Ovary (tissue), 10 donors: ENCODE measurements at regions of chr17 and their contacts with region 1.

Region 1: DNA sequence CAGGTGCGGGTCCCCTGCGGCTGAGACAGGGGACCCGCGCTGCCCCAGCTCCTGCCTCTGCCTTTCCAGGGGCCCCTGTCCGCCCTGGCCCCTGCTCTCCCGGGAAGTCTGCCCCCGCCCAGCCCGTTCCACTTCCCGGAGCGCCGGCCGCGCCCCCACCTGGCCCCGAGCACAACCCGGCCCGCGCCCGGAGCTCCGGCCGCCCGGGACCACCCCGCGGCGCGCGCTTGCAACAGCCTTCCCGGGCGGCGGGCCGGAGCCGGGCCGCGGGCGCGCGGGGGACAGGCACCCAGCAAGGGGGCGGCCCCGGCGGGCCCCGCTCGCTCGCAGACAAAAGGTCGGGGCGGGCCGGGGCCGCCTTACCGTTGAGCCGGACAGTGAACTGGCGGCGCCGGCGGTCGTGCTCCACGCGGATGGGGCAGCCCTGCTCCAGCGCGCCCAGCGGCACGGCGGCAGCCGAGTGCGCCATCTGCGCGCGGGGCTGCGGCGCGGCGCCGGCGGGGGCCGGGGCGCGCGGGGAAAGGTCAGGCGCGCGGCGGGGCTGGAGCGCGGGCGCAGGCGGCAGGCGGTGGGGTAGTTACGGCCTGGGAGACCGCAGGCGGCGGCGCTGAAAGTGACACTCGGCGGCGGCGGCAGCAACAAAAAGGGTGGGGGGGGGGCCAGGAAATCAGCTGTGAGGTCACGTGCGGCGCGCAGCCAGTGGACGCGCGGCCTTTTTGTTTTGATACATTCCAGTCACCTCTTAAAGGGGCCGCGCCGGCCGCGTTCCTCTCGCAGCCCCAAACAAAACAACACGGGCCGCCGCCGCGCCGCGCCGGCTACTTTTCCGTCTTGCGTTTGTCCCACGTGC is at the start of gene NATD1:
- DNase-seq: peak; percentile 78 to 89 (median 85)
- H3K4me3 ChIP-seq: peak within 1 kb of the TSS; percentile 56
- H3K27ac ChIP-seq: peak within 1 kb of the TSS in 1 of 2 donors; percentile 42
- H3K4me1 ChIP-seq: peaks cover 6% of the 10 kb centered on the region
- H3K27me3 ChIP-seq: no peaks in the 10 kb centered on the region
- CTCF ChIP-seq: no peak
- EP300 ChIP-seq: no peak
- POLR2A ChIP-seq: no peak
- total RNA-seq, gene NATD1: 2.8 to 9.0 (median 5.2) TPM

Region 2: GRCh38 chr17:21043286-21044232 is 209.5 kb before region 1 on chr17:
- intact Hi-C with region 1: loop called in 1 of 4 experiments (anchors 10 kb)
- DNase-seq: peak; percentile 97 to 99 (median 98)
- H3K4me3 ChIP-seq: peak overlapping the region; percentile 82
- H3K27ac ChIP-seq: peak overlapping the region; percentile 89 to 96
- H3K4me1 ChIP-seq: peaks cover 8% of the 10 kb centered on the region
- H3K27me3 ChIP-seq: no peaks in the 10 kb centered on the region
- CTCF ChIP-seq: peak; percentile 80 to 95 (median 95)
- EP300 ChIP-seq: no peak
- POLR2A ChIP-seq: peak; percentile 75

Region 3: GRCh38 chr17:21214015-21214776 is 38.8 kb before region 1 on chr17 and contains the start of gene TMEM11:
- intact Hi-C with region 1: loop called in 1 of 4 experiments (anchors 2 kb)
- DNase-seq: peak; percentile 94 to 97 (median 95)
- H3K4me3 ChIP-seq: peak within 1 kb of the TSS; percentile 93
- H3K27ac ChIP-seq: peak within 1 kb of the TSS; percentile 61 to 92
- H3K4me1 ChIP-seq: peaks cover 14% of the 10 kb centered on the region
- H3K27me3 ChIP-seq: no peaks in the 10 kb centered on the region
- CTCF ChIP-seq: peak in 1 of 3 donors; percentile 40
- EP300 ChIP-seq: no peak
- POLR2A ChIP-seq: peak; percentile 56
- total RNA-seq, gene TMEM11: 10.5 to 18.5 (median 15.8) TPM